ENCODE measurements at regions of chr4 and their contacts with region 1.

Region 1: GRCh38 chr4:705278-706082 is at the start of gene PCGF3:
- H3K4me3 Mint-ChIP-seq: peak within 1 kb of the TSS; percentile 94
- H3K27ac Mint-ChIP-seq: peak within 1 kb of the TSS; percentile 97
- H3K4me1 Mint-ChIP-seq: peaks cover 60% of the 10 kb centered on the region
- H3K27me3 Mint-ChIP-seq: peaks cover 9% of the 10 kb centered on the region

Region 2: DNA sequence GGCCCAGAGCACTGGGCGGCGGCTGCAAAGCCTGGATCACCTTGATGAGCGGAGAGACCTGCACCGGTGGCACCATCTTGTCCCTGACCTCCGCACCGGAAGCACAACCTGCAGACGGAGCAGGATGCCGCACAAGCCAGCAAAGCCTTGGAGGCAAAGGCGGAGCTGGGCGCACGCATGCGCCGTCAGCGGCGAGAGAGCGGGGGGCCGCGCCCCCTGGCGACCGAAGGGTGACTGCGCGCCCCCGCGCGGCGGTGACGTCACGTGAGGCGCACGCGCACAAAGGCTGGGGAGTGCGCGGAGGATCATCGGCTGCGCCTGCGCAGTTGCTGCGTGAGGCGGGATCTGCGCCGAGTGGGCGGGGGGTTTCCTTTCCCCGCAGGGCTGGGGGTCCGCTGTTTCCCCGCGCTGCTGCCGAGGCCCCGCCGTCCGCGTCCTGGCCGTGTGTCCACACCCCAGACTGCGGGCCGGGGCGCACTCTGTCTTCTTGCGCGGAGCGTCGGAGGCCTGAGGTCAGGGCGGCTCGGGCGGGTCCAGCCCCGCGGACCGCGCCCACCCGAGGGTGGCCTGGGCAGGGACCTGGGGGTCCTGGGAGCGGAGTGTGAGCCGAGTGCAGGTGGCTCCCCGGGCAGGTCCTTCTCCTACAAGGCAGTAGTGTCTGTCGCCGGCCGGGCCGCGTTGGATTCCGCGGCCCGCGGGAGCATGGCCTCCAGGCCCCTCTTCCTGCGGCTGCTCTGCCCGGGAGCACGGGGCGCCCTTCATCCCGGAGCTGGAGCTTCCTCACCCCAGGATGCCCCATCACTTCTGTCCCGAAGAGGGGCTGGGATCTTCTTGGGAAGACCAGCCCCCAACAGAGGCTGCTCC is 31.1 kb before region 1 on chr4 and contains the starts of genes ATP5ME and MYL5:
- intact Hi-C with region 1: no loop called
- H3K4me3 Mint-ChIP-seq: peak within 1 kb of the TSS; percentile 82
- H3K27ac Mint-ChIP-seq: peak within 1 kb of the TSS; percentile 91
- H3K4me1 Mint-ChIP-seq: peaks cover 44% of the 10 kb centered on the region
- H3K27me3 Mint-ChIP-seq: no peaks in the 10 kb centered on the region

Region 3: GRCh38 chr4:781493-782216 is 76.2 kb after region 1 on chr4:
- intact Hi-C with region 1: loop called (anchors 5 kb)
- H3K4me3 Mint-ChIP-seq: peak overlapping the region; percentile 87
- H3K27ac Mint-ChIP-seq: peak overlapping the region; percentile 93
- H3K4me1 Mint-ChIP-seq: peaks cover 73% of the 10 kb centered on the region
- H3K27me3 Mint-ChIP-seq: peaks cover 28% of the 10 kb centered on the region

Region 4: GRCh38 chr4:1167247-1167949 is 461.9 kb after region 1 on chr4:
- intact Hi-C with region 1: no loop called
- H3K4me3 Mint-ChIP-seq: peak overlapping the region; percentile 77
- H3K27ac Mint-ChIP-seq: peak overlapping the region; percentile 12
- H3K4me1 Mint-ChIP-seq: peaks cover 48% of the 10 kb centered on the region
- H3K27me3 Mint-ChIP-seq: peaks cover 69% of the 10 kb centered on the region

Measured in dendritic cell treated with granulocyte-macrophage colony-stimulating factor and Interleukin-4, amounts not matched to agents 40 ng/mL and 50 ng/mL, for 4 days (primary cell).